ENCODE measurements at regions of chr4 and their contacts with region 1.

Region 1: GRCh38 chr4:38663801-38664705 is at the start of gene KLF3:
- DNase-seq: peak; percentile 96
- H3K4me3 ChIP-seq: peak within 1 kb of the TSS; percentile 89 to 99 (median 94)
- H3K27ac ChIP-seq: peak within 1 kb of the TSS; percentile 100
- H3K4me1 ChIP-seq: peaks cover 2 to 46% (median 33%) of the 10 kb centered on the region in 4 donors
- H3K27me3 ChIP-seq: no peaks in the 10 kb centered on the region
- CTCF ChIP-seq: no peak
- EP300 ChIP-seq: no peak
- POLR2A ChIP-seq: peak; percentile 85
- total RNA-seq, gene KLF3: 111 to 174 (median 132) TPM

Region 2: DNA sequence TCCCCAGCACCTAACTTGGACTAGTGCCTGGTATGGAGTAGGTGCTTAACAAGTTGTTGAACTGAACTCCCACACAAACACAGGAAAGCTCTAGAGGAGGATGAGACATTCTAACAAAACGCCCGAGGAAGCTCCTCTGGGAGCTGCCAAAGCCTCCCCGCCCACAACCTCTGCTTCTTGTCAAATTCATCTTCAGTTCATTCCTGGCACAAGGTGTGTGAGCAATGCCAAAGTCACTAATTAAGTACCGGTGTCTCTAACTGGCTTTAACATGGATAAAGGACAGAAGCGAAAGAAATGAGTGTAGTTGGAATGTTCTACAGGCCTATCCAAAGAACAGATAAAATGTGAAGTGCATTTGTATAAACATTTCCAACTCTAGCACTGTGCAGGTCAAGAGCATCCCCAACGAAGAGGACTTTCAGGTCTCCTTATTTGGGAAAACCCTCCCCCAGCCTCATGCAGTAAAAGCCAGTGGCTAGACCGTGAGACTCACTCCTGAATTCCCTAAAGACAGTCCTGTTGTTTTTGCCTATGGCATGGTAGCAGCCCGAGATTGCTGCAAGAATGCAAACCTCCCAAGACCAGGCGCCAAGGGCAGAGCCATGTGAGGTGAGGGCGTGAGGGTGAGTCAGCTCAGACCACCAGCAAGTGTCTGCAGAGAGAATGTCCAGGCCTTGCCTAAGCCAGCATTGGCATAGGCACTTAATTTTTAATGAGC is 72.3 kb before region 1 on chr4:
- in situ Hi-C with region 1: no loop called
- intact Hi-C with region 1: loop called (anchors 10 kb)
- DNase-seq: no peak
- H3K4me3 ChIP-seq: no peak overlapping the region
- H3K27ac ChIP-seq: peak overlapping the region; percentile 19 to 80 (median 50)
- H3K4me1 ChIP-seq: peaks cover 0 to 5% (median 0%) of the 10 kb centered on the region in 4 donors
- H3K27me3 ChIP-seq: no peaks in the 10 kb centered on the region
- CTCF ChIP-seq: no peak
- EP300 ChIP-seq: peak; percentile 78
- POLR2A ChIP-seq: no peak

Measured in transverse colon (tissue), 4 donors.